PC-9 (cell line): ENCODE measurements at regions of chr11 and their contacts with region 1.

Region 1: DNA sequence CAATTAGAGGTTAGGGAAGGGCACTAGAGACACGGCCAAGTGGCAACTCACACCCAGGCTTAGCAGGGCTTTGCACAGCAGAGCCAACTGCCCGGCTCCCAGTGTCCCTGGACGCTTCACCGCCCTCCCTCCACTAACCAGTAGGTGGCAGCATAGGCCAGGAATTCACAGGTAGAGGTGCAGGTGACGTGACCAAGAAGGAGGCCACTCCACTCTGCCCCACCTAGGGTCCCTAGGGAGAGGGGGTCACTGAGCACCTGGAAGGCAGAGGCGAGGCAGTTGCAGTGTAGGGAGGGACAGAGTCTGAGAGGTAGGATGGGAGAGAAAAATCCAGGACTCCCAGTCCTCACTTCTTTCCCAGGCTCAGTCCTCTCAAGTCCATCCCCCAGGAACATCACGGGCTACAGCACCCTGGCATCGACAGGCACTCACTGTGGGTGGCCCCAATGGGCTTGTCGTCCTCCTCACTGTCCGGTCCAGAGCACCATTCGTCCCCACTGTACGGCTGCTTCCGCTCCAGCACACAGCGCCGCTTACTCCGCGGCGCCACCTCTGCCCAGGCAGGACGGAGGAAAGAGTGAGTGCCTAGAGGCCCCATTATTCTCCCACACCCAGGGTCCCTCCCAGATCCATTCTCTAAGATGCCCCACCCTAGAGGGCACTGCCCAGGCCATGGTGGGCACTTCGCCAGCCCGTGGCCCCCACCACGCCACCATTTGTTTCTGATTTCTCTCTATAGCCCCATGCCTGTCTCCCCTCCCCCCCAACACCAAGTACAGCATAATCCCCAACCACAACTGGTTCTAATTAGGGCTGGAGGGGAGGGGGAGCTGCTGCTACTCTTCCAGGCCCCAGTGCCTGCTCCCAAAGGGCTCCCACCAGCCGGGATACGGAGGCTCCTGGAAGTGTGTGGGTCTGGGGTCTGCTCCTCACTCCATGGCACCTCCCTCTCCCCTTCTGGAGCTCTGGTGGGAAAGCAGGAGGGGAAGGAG is 18.4 kb downstream of the BCL9L start:
- DNase-seq: peak; percentile 78 to 89
- H3K4me3 ChIP-seq: no peak overlapping the region
- H3K27ac ChIP-seq: peak overlapping the region; percentile 21; the same call in 1 of the 2 replicates
- H3K4me1 ChIP-seq: peaks cover 50% of the 10 kb centered on the region
- H3K27me3 ChIP-seq: no peaks in the 10 kb centered on the region
- CTCF ChIP-seq: peak; percentile 99

Region 2: GRCh38 chr11:118659314-118659952 is 247.9 kb before region 1 on chr11:
- CTCF ChIA-PET with region 1: no interaction called
- POLR2A ChIA-PET with region 1: interaction called, 31 read pairs
- intact Hi-C with region 1: no loop called
- DNase-seq: peak; percentile 81 to 92
- H3K4me3 ChIP-seq: no peak overlapping the region
- H3K27ac ChIP-seq: no peak overlapping the region
- H3K4me1 ChIP-seq: peaks cover 11% of the 10 kb centered on the region
- H3K27me3 ChIP-seq: no peaks in the 10 kb centered on the region
- CTCF ChIP-seq: peak; percentile 98

Region 3: DNA sequence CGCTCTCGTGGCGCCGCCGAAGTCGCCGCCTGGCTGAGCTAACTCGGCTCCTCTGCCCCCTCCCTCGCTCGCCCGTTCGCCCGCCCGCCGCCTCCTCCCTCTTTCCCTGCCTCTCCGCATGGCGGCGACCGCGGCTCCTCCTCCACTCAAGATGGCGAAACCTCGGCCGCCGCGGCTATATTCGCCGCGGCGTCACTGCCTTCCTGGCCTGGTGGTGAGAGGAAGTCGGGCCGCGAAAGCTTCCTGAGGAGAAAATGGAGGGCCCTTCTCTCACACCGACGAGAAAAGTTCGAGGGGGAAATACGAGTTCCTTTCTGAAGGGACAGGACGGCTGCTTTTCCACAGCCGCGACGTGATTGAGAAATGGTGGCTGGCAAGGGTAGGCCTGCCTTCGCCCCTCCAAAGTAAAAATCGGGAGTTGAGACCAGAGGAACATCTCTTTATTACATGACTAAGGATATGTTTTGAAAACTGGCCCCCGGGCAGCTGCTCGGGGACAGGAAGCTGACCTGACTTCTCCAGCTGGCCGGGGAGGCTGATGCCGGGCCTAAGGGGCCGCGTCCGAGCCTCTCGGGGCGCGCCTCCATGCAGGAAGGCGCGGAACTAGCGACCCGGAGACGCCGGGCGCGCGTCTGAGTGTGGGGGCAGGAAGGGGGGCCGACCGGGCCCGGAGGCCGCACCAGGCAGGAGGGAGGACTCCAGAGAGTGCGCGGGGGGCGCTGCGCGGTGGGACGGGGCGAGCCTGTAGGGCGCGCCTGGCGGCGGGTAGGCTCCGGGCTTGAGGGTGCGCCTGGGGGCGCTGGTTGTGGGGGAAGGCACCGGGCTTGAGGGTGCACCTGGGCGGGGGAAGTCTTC is 116.0 kb before region 1 on chr11 and contains the start of gene DDX6:
- CTCF ChIA-PET with region 1: interaction called, 6 read pairs
- POLR2A ChIA-PET with region 1: interaction called, 5 read pairs
- intact Hi-C with region 1: loop called (anchors 2 kb)
- DNase-seq: peak; percentile 73 to 85
- H3K4me3 ChIP-seq: peak within 1 kb of the TSS; percentile 98
- H3K27ac ChIP-seq: peak within 1 kb of the TSS; percentile 85
- H3K4me1 ChIP-seq: peaks cover 20% of the 10 kb centered on the region
- H3K27me3 ChIP-seq: no peaks in the 10 kb centered on the region
- CTCF ChIP-seq: peak; percentile 53
- total RNA-seq, gene DDX6: 73.1 and 84.4 TPM in 2 replicates

Region 4: DNA sequence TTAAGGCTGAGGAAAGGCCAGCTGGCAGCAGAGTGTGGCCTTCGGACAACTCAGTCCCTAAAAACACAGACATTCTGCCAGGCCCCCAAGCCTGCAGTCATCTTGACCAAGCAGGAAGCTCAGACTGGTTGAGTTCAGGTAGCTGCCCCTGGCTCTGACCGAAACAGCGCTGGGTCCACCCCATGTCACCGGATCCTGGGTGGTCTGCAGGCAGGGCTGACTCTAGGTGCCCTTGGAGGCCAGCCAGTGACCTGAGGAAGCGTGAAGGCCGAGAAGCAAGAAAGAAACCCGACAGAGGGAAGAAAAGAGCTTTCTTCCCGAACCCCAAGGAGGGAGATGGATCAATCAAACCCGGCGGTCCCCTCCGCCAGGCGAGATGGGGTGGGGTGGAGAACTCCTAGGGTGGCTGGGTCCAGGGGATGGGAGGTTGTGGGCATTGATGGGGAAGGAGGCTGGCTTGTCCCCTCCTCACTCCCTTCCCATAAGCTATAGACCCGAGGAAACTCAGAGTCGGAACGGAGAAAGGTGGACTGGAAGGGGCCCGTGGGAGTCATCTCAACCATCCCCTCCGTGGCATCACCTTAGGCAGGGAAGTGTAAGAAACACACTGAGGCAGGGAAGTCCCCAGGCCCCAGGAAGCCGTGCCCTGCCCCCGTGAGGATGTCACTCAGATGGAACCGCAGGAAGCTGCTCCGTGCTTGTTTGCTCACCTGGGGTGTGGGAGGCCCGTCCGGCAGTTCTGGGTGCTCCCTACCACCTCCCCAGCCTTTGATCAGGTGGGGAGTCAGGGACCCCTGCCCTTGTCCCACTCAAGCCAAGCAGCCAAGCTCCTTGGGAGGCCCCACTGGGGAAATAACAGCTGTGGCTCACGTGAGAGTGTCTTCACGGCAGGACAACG is 12.0 kb before region 1 on chr11:
- CTCF ChIA-PET with region 1: no interaction called
- POLR2A ChIA-PET with region 1: no interaction called
- intact Hi-C with region 1: no loop called
- DNase-seq: no peak
- H3K4me3 ChIP-seq: no peak overlapping the region
- H3K27ac ChIP-seq: no peak overlapping the region
- H3K4me1 ChIP-seq: no peaks in the 10 kb centered on the region
- H3K27me3 ChIP-seq: no peaks in the 10 kb centered on the region
- CTCF ChIP-seq: no peak

Region 5: GRCh38 chr11:118918128-118918685 is 10.9 kb after region 1 on chr11:
- CTCF ChIA-PET with region 1: interaction called, 5 read pairs
- POLR2A ChIA-PET with region 1: interaction called, 12 read pairs
- intact Hi-C with region 1: loop called (anchors 1 kb)
- DNase-seq: peak; percentile 79 to 97
- H3K4me3 ChIP-seq: peak overlapping the region; percentile 54
- H3K27ac ChIP-seq: peak overlapping the region; percentile 96
- H3K4me1 ChIP-seq: peaks cover 77% of the 10 kb centered on the region
- H3K27me3 ChIP-seq: no peaks in the 10 kb centered on the region
- CTCF ChIP-seq: no peak

Region 6: GRCh38 chr11:118956094-118956846 is 48.9 kb after region 1 on chr11 and contains the start of gene UPK2:
- CTCF ChIA-PET with region 1: no interaction called
- POLR2A ChIA-PET with region 1: no interaction called
- intact Hi-C with region 1: loop called (anchors 1 kb)
- DNase-seq: peak; percentile 92 to 93
- H3K4me3 ChIP-seq: peak within 1 kb of the TSS; percentile 49
- H3K27ac ChIP-seq: peak within 1 kb of the TSS; percentile 62
- H3K4me1 ChIP-seq: peaks cover 26% of the 10 kb centered on the region
- H3K27me3 ChIP-seq: no peaks in the 10 kb centered on the region
- CTCF ChIP-seq: peak; percentile 97
- total RNA-seq, gene UPK2: 17.1 and 23.2 TPM in 2 replicates

Region 7: GRCh38 chr11:119315131-119316015 is 408.0 kb after region 1 on chr11:
- CTCF ChIA-PET with region 1: no interaction called
- POLR2A ChIA-PET with region 1: interaction called, 31 read pairs
- intact Hi-C with region 1: loop called (anchors 5 kb)
- DNase-seq: peak; percentile 65 to 71
- H3K4me3 ChIP-seq: peak overlapping the region; percentile 67
- H3K27ac ChIP-seq: no peak overlapping the region
- H3K4me1 ChIP-seq: peaks cover 31% of the 10 kb centered on the region
- H3K27me3 ChIP-seq: peaks cover 20% of the 10 kb centered on the region
- CTCF ChIP-seq: peak; percentile 34; the same call in 1 of the 2 replicates